Activated naive CD4-positive, alpha-beta T cell treated with anti-CD3 and anti-CD28 coated beads for 36 hours (primary cell): ENCODE measurements at regions of chr19 and their contacts with region 1.

Region 1: GRCh38 chr19:6125571-6125989 is 9.9 kb upstream of the ACSBG2 start:
- DNase-seq: peak; percentile 76
- H3K4me3 Mint-ChIP-seq: no peak overlapping the region
- H3K27ac Mint-ChIP-seq: no peak overlapping the region
- H3K4me1 Mint-ChIP-seq: no peaks in the 10 kb centered on the region
- H3K27me3 Mint-ChIP-seq: no peaks in the 10 kb centered on the region

Region 2: GRCh38 chr19:5987077-5987818 is 138.3 kb before region 1 on chr19:
- CTCF ChIA-PET with region 1: interaction called, 5 read pairs
- intact Hi-C with region 1: loop called (anchors 1 kb)
- DNase-seq: peak; percentile 84
- H3K4me3 Mint-ChIP-seq: peak overlapping the region; percentile 48
- H3K27ac Mint-ChIP-seq: no peak overlapping the region
- H3K4me1 Mint-ChIP-seq: peaks cover 24% of the 10 kb centered on the region
- H3K27me3 Mint-ChIP-seq: no peaks in the 10 kb centered on the region

Region 3: GRCh38 chr19:6048808-6049405 is 76.7 kb before region 1 on chr19:
- CTCF ChIA-PET with region 1: interaction called, 70 read pairs
- intact Hi-C with region 1: loop called (anchors 1 kb)
- DNase-seq: peak; percentile 88
- H3K4me3 Mint-ChIP-seq: no peak overlapping the region
- H3K27ac Mint-ChIP-seq: no peak overlapping the region
- H3K4me1 Mint-ChIP-seq: peaks cover 3% of the 10 kb centered on the region
- H3K27me3 Mint-ChIP-seq: no peaks in the 10 kb centered on the region

Region 4: DNA sequence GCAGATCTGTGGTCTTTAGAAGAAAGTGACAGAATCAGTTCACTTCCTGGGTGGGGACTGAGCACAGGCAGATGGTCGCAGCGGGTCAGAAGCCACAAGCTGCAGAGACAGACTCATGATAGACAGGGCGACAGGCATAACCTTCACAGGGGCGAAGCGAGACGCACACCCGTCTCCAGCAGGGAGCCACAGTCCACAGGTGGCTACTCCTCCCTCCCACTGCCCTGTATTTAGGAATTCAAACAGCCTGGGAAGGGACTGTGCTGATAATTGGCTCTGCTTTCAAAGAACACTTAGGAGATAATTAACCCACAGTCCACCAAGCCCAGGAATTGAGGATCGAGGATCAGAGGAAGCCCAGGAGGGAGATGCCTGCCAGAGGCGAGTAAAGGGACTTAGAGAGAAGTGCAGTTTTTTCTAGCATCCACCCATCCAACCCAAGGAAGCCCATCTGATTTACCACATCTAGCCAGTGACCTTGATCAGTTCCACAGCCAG is 38.5 kb before region 1 on chr19:
- CTCF ChIA-PET with region 1: no interaction called
- intact Hi-C with region 1: loop called (anchors 5 kb)
- DNase-seq: peak; percentile 31
- H3K4me3 Mint-ChIP-seq: peak overlapping the region; percentile 54
- H3K27ac Mint-ChIP-seq: no peak overlapping the region
- H3K4me1 Mint-ChIP-seq: peaks cover 19% of the 10 kb centered on the region
- H3K27me3 Mint-ChIP-seq: no peaks in the 10 kb centered on the region

Region 5: DNA sequence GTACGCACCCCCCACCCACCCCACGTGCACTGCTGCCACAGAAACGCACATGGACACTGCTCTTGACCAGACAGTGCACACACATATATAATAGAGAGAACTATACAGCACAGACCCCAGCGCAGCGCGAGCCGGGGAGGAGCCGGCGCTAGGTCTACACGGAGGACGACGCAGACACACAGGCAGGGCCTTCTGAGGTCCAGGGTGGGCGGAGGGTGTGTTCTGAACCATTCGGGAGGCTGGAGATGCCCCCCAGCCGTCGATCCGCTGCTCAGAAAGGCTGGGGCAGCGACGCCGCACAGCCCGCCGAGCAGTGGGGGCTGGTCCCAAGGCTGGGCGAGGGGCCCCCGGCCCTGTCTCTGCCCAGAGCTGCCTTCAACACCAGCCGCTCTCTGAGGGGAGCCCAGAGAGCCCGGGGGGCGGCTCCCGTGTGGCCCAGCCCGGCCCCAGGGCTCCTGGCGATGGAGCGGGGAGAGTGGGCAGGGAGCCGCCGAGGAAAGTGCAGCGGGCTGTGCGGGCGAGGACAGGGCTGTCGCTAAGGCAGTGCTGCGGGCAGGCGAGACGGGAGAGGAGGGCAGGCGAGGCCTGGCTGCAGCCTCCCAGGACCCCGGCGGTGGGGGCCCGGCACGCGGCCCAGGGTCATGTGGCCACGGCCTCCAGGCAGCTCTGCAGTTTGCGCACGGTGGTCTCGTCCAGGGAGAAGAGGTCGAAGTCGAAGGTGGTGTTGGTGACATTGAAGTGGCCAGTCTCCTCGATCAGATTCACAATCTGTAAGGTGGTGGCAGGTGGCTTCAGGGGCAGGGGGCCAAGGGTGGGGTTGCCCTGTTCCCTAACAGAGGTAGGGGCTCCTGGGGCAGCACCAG is 87.1 kb after region 1 on chr19:
- CTCF ChIA-PET with region 1: no interaction called
- intact Hi-C with region 1: no loop called
- DNase-seq: no peak
- H3K4me3 Mint-ChIP-seq: no peak overlapping the region
- H3K27ac Mint-ChIP-seq: no peak overlapping the region
- H3K4me1 Mint-ChIP-seq: no peaks in the 10 kb centered on the region
- H3K27me3 Mint-ChIP-seq: no peaks in the 10 kb centered on the region